Activated CD8-positive, alpha-beta T cell treated with anti-CD3 and anti-CD28 coated beads, Interleukin-2, amount 10 ng/mL, durations not matched to agents 7 days and 5 days (primary cell): ENCODE measurements at regions of chr6 and their contacts with region 1.

Region 1: GRCh38 chr6:151765444-151765886 is 42.0 kb upstream of the ESR1 start:
- DNase-seq: peak; percentile 68
- ATAC-seq: no peak
- H3K4me3 Mint-ChIP-seq: no peak overlapping the region
- H3K27ac Mint-ChIP-seq: no peak overlapping the region
- H3K4me1 Mint-ChIP-seq: peaks cover 14% of the 10 kb centered on the region
- H3K27me3 Mint-ChIP-seq: peaks cover 18% of the 10 kb centered on the region

Region 2: DNA sequence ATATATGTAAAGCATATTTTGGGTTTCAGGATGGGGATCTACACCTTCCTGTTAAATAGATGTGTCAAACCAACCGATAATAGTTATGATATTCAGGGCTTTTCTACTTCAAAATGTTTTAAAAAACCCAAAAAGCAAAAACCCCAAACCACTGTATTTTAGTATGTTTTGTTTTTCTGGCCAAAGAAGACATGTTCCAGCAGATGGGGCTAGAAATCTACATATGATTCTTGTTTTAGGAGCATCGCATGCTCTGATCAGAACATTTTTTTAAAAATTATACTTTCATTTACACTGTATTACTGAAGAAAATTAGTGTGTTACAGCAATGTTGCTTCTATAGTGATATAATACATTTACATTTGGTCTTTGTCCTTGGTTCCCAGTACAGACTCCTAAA is 324.5 kb before region 1 on chr6:
- CTCF ChIA-PET with region 1: interaction called, 10 read pairs
- POLR2A ChIA-PET with region 1: no interaction called
- DNase-seq: no peak
- ATAC-seq: no peak
- H3K4me3 Mint-ChIP-seq: peak overlapping the region; percentile 3
- H3K27ac Mint-ChIP-seq: no peak overlapping the region
- H3K4me1 Mint-ChIP-seq: peaks cover 15% of the 10 kb centered on the region
- H3K27me3 Mint-ChIP-seq: no peaks in the 10 kb centered on the region

Region 3: GRCh38 chr6:151690768-151691562 is 74.5 kb before region 1 on chr6:
- CTCF ChIA-PET with region 1: interaction called, 27 read pairs
- POLR2A ChIA-PET with region 1: no interaction called
- DNase-seq: peak; percentile 49
- ATAC-seq: peak; percentile 91
- H3K4me3 Mint-ChIP-seq: peak overlapping the region; percentile 69
- H3K27ac Mint-ChIP-seq: peak overlapping the region; percentile 75
- H3K4me1 Mint-ChIP-seq: peaks cover 18% of the 10 kb centered on the region
- H3K27me3 Mint-ChIP-seq: peaks cover 4% of the 10 kb centered on the region

Region 4: DNA sequence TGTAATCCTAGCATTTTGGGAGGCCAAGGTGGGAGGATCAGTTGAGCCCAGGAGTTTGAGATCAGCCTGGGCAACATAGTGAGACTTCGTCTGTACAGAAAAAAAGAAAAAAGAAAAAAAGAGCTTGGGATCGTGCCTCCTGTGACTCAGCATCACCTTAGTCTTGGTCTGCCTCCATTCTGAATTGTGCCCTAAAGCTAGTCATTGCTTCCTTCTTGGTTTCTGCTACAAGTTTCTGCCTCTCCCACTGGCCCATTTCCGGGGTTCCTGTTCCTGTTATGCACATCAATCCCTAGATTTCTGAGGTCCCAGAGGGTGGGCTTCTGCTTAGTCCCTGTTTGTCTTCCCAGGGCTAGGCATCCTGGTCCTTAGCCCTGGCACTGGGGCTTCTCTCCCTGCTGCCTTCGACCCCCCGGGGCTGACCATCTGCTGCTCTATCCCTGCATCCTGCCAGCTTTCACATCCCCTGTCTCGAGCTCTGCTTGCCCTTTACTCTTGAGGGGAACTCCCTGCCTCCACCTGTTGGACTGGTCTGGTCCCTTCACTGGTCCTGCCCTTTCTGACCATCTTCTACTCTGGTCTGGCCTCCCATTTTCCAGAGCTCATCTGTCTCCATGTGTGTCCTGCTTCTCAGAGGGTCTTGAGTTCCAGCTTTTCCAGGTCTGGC is 35.5 kb before region 1 on chr6:
- CTCF ChIA-PET with region 1: no interaction called
- POLR2A ChIA-PET with region 1: no interaction called
- DNase-seq: no peak
- ATAC-seq: no peak
- H3K4me3 Mint-ChIP-seq: no peak overlapping the region
- H3K27ac Mint-ChIP-seq: no peak overlapping the region
- H3K4me1 Mint-ChIP-seq: peaks cover 3% of the 10 kb centered on the region
- H3K27me3 Mint-ChIP-seq: peaks cover under 1% of the 10 kb centered on the region

Region 5: GRCh38 chr6:151749341-151749740 is 16.1 kb before region 1 on chr6:
- CTCF ChIA-PET with region 1: interaction called, 11 read pairs
- POLR2A ChIA-PET with region 1: no interaction called
- DNase-seq: no peak
- ATAC-seq: no peak
- H3K4me3 Mint-ChIP-seq: no peak overlapping the region
- H3K27ac Mint-ChIP-seq: no peak overlapping the region
- H3K4me1 Mint-ChIP-seq: no peaks in the 10 kb centered on the region
- H3K27me3 Mint-ChIP-seq: peaks cover 4% of the 10 kb centered on the region

Region 6: GRCh38 chr6:152124429-152125074 is 359.1 kb after region 1 on chr6:
- CTCF ChIA-PET with region 1: interaction called, 14 read pairs
- POLR2A ChIA-PET with region 1: no interaction called
- DNase-seq: no peak
- ATAC-seq: no peak
- H3K4me3 Mint-ChIP-seq: no peak overlapping the region
- H3K27ac Mint-ChIP-seq: no peak overlapping the region
- H3K4me1 Mint-ChIP-seq: no peaks in the 10 kb centered on the region
- H3K27me3 Mint-ChIP-seq: no peaks in the 10 kb centered on the region

Region 7: GRCh38 chr6:152267967-152268845 is 502.7 kb after region 1 on chr6:
- CTCF ChIA-PET with region 1: interaction called, 18 read pairs
- POLR2A ChIA-PET with region 1: no interaction called
- DNase-seq: peak; percentile 43
- ATAC-seq: no peak
- H3K4me3 Mint-ChIP-seq: no peak overlapping the region
- H3K27ac Mint-ChIP-seq: no peak overlapping the region
- H3K4me1 Mint-ChIP-seq: peaks cover 10% of the 10 kb centered on the region
- H3K27me3 Mint-ChIP-seq: no peaks in the 10 kb centered on the region